ENCODE measurements at regions of chrX and their contacts with region 1.

Region 1: GRCh38 chrX:40671126-40671525 is 23.8 kb upstream of the CXorf38 start:
- DNase-seq: no peak
- ATAC-seq: peak in 4 of 8 donors; percentile 47 to 78 (median 54)
- H3K4me3 ChIP-seq: no peak overlapping the region
- H3K27ac ChIP-seq: peak overlapping the region in 2 of 10 donors; percentile 25 to 28
- H3K4me1 ChIP-seq: peaks cover 0 to 9% (median 0%) of the 10 kb centered on the region in 9 donors
- H3K27me3 ChIP-seq: peaks cover 0 to 60% (median 0%) of the 10 kb centered on the region in 7 donors
- CTCF ChIP-seq: peak in 2 of 9 donors; percentile 21 to 24

Region 2: GRCh38 chrX:40685362-40685918 is 14.3 kb after region 1 on chrX:
- intact Hi-C with region 1: loop called in 1 of 10 experiments (anchors 1 kb)
- DNase-seq: no peak
- ATAC-seq: no peak
- H3K4me3 ChIP-seq: no peak overlapping the region
- H3K27ac ChIP-seq: no peak overlapping the region
- H3K4me1 ChIP-seq: peaks cover 0 to 20% (median 0%) of the 10 kb centered on the region in 9 donors
- H3K27me3 ChIP-seq: peaks cover 0 to 63% (median 0%) of the 10 kb centered on the region in 7 donors
- CTCF ChIP-seq: no peak

Measured in heart right ventricle (tissue), 16 donors.